CD14-positive monocyte (primary cell): ENCODE measurements at regions of chr19 and their contacts with region 1.

Region 1: GRCh38 chr19:11155373-11156120 is at the start of gene SPC24:
- DNase-seq: peak; percentile 96 to 98 (median 98)
- H3K4me3 ChIP-seq: peak within 1 kb of the TSS; percentile 58 to 88 (median 65)
- H3K4me3 Mint-ChIP-seq: peak within 1 kb of the TSS; percentile 77 to 88
- H3K27ac ChIP-seq: peak within 1 kb of the TSS; percentile 18 to 65
- H3K27ac Mint-ChIP-seq: peak within 1 kb of the TSS; percentile 37 to 88 (median 78)
- H3K4me1 ChIP-seq: peaks cover 20 to 29% of the 10 kb centered on the region in 2 donors
- H3K4me1 Mint-ChIP-seq: peaks cover 28% of the 10 kb centered on the region
- H3K27me3 ChIP-seq: no peaks in the 10 kb centered on the region
- H3K27me3 Mint-ChIP-seq: peaks cover 0 to 3% (median 3%) of the 10 kb centered on the region in 3 donors
- CTCF ChIP-seq: no peak
- polyA plus RNA-seq, gene SPC24: 0.27 TPM in 1 of 3 donors, not detected in the others

Region 2: GRCh38 chr19:11041966-11042627 is 113.5 kb before region 1 on chr19:
- intact Hi-C with region 1: no loop called
- DNase-seq: no peak
- H3K4me3 ChIP-seq: no peak overlapping the region
- H3K4me3 Mint-ChIP-seq: no peak overlapping the region
- H3K27ac ChIP-seq: no peak overlapping the region
- H3K27ac Mint-ChIP-seq: peak overlapping the region in 1 of 7 donors; percentile 7
- H3K4me1 ChIP-seq: no peaks in the 10 kb centered on the region
- H3K4me1 Mint-ChIP-seq: no peaks in the 10 kb centered on the region
- H3K27me3 ChIP-seq: peaks cover 0 to 3% of the 10 kb centered on the region in 2 donors
- H3K27me3 Mint-ChIP-seq: peaks cover 8 to 10% (median 10%) of the 10 kb centered on the region in 3 donors
- CTCF ChIP-seq: no peak

Region 3: DNA sequence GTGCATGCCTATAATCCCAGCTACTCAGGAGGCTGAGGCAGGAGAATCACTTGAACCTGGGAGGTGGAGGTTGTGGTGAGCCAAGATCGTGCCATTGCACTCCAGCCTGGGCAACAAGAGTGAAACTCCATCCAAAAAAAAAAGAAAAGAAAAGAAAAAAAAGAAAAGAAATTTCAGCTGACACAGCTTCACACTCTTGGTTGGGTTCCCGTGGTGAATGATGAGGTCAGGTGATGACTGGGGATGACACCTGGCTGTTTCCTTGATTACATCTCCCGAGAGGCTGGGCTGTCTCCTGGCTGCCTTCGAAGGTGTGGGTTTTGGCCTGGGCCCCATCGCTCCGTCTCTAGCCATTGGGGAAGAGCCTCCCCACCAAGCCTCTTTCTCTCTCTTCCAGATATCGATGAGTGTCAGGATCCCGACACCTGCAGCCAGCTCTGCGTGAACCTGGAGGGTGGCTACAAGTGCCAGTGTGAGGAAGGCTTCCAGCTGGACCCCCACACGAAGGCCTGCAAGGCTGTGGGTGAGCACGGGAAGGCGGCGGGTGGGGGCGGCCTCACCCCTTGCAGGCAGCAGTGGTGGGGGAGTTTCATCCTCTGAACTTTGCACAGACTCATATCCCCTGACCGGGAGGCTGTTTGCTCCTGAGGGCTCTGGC is 44.3 kb before region 1 on chr19:
- intact Hi-C with region 1: no loop called
- DNase-seq: no peak
- H3K4me3 ChIP-seq: no peak overlapping the region
- H3K4me3 Mint-ChIP-seq: no peak overlapping the region
- H3K27ac ChIP-seq: no peak overlapping the region
- H3K27ac Mint-ChIP-seq: peak overlapping the region in 1 of 7 donors; percentile 77
- H3K4me1 ChIP-seq: no peaks in the 10 kb centered on the region
- H3K4me1 Mint-ChIP-seq: no peaks in the 10 kb centered on the region
- H3K27me3 ChIP-seq: no peaks in the 10 kb centered on the region
- H3K27me3 Mint-ChIP-seq: no peaks in the 10 kb centered on the region
- CTCF ChIP-seq: no peak

Region 4: GRCh38 chr19:11168568-11168967 is 13.0 kb after region 1 on chr19:
- intact Hi-C with region 1: no loop called
- DNase-seq: no peak
- H3K4me3 ChIP-seq: no peak overlapping the region
- H3K4me3 Mint-ChIP-seq: no peak overlapping the region
- H3K27ac ChIP-seq: no peak overlapping the region
- H3K27ac Mint-ChIP-seq: no peak overlapping the region
- H3K4me1 ChIP-seq: no peaks in the 10 kb centered on the region
- H3K4me1 Mint-ChIP-seq: no peaks in the 10 kb centered on the region
- H3K27me3 ChIP-seq: no peaks in the 10 kb centered on the region
- H3K27me3 Mint-ChIP-seq: peaks cover 0 to 3% (median 0%) of the 10 kb centered on the region in 3 donors
- CTCF ChIP-seq: no peak

Region 5: GRCh38 chr19:11197264-11198174 is 42.0 kb after region 1 on chr19 and contains the start of gene KANK2:
- intact Hi-C with region 1: loop called in 1 of 2 experiments (anchors 5 kb)
- DNase-seq: peak; percentile 60 to 71 (median 67)
- H3K4me3 ChIP-seq: peak within 1 kb of the TSS; percentile 48 to 76 (median 61)
- H3K4me3 Mint-ChIP-seq: peak within 1 kb of the TSS; percentile 76 to 87
- H3K27ac ChIP-seq: peak within 1 kb of the TSS in 1 of 2 donors; percentile 48
- H3K27ac Mint-ChIP-seq: peak within 1 kb of the TSS in 3 of 7 donors; percentile 70 to 81 (median 78)
- H3K4me1 ChIP-seq: peaks cover 22 to 31% of the 10 kb centered on the region in 2 donors
- H3K4me1 Mint-ChIP-seq: peaks cover 22% of the 10 kb centered on the region
- H3K27me3 ChIP-seq: peaks cover 0 to 5% of the 10 kb centered on the region in 2 donors
- H3K27me3 Mint-ChIP-seq: peaks cover 0 to 17% (median 8%) of the 10 kb centered on the region in 3 donors
- CTCF ChIP-seq: no peak
- polyA plus RNA-seq, gene KANK2: 0.40 to 1.3 (median 0.64) TPM

Region 6: DNA sequence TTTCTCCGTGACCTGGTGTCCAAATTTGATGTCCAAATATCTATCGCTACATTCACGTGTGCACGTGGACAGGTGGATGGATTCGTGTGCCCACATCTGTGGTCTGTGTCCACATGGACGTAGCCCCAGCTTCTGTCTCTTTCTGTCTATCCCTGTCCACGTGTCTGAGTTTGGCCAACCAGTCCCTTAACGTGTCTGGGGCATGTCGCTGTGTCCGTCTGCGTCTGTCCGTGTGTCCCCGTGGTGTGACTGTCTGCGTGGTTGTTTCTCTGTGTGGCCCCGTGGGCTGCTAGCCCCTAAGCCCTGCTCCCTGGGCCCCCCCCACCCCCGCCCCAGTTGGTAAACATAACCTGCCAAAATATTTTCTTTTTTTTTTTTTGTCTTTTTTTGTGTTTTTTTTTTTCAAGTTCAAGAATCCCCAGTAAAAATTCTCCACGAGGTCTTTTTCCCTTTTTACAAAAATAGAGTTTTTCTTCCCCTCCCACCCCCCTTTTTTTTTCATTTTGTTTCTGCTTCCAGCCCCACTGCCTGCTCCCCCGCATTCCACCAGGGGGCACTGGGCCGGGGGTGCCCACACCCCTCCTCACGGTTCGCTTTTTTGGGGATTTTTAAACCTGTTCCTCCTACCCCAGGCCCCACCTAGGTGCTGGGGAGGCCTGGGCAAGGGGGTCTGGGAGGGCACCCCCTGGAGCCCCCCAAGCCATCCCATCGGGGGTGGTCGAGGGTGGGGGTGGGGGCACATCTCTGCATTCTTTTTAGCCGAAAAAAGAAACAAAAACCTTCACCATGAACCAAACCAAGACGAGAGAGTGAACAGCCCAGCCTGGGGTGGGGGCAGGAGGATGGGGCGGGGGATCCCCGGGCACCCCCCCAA is 298.2 kb after region 1 on chr19:
- intact Hi-C with region 1: no loop called
- DNase-seq: no peak
- H3K4me3 ChIP-seq: no peak overlapping the region
- H3K4me3 Mint-ChIP-seq: no peak overlapping the region
- H3K27ac ChIP-seq: no peak overlapping the region
- H3K27ac Mint-ChIP-seq: no peak overlapping the region
- H3K4me1 ChIP-seq: no peaks in the 10 kb centered on the region
- H3K4me1 Mint-ChIP-seq: no peaks in the 10 kb centered on the region
- H3K27me3 ChIP-seq: no peaks in the 10 kb centered on the region
- H3K27me3 Mint-ChIP-seq: peaks cover 4 to 13% (median 9%) of the 10 kb centered on the region in 3 donors
- CTCF ChIP-seq: peak; percentile 53